IMR-90 (cell line): ENCODE measurements at regions of chr20 and their contacts with region 1.

Region 1: DNA sequence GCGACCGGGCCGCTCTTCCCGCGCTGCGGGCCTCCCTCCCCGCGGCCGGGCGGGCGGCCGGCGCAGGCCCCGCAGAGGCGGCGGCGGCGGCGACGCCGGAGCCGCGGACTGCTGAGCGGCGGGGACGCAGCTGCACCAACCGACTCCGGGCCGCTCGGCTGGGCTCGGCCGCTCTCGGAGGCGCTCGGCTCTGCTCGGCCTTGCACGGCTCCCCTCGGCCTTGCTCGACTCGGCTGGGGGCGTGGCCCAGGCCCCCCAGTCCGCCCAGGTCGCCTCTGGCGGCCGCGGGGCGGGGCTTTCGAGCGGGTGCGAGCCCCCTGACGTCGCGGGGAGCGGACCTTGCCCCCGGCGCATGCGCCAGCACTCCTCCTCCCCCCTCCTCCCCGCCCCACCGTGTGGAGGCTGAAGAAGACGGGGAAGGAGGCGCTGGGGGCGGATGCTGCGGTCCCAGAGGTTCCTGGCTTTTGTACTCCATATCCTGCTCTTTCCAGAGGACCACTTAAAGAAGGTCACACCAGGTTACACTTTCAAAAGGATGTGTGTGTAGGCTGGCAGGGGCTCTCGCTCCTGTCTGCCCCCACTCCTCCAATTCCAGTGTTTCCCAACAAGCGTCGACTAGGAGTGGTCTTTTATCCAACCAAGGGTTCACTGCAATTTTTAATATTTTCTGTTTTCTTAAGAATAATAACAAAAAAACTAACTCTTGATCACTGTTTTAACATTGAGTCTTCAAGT is at the start of gene ZHX3:
- DNase-seq: peak; percentile 94
- ATAC-seq: peak; percentile 94
- H3K4me3 ChIP-seq: peak within 1 kb of the TSS; percentile 55
- H3K27ac ChIP-seq: peak within 1 kb of the TSS; percentile 97
- H3K4me1 ChIP-seq: peaks cover 4% of the 10 kb centered on the region
- H3K27me3 ChIP-seq: no peaks in the 10 kb centered on the region
- CTCF ChIP-seq: no peak
- POLR2A ChIP-seq: no peak
- RAD21 ChIP-seq: no peak
- total RNA-seq, gene ZHX3: 28.0 and 28.3 TPM in 2 replicates

Region 2: GRCh38 chr20:41249406-41250281 is 68.1 kb before region 1 on chr20:
- CTCF ChIA-PET with region 1: interaction called, 4 read pairs
- POLR2A ChIA-PET with region 1: no interaction called
- dilution Hi-C with region 1: no loop called
- in situ Hi-C with region 1: no loop called
- intact Hi-C with region 1: loop called (anchors 5 kb)
- DNase-seq: peak; percentile 87
- ATAC-seq: peak; percentile 91
- H3K4me3 ChIP-seq: no peak overlapping the region
- H3K27ac ChIP-seq: peak overlapping the region; percentile 5
- H3K4me1 ChIP-seq: peaks cover 21% of the 10 kb centered on the region
- H3K27me3 ChIP-seq: no peaks in the 10 kb centered on the region
- CTCF ChIP-seq: peak; percentile 24; the same call in 1 of the 2 replicates
- POLR2A ChIP-seq: no peak
- RAD21 ChIP-seq: peak; percentile 24; the same call in 1 of the 2 replicates

Region 3: GRCh38 chr20:41276317-41276751 is 41.4 kb before region 1 on chr20:
- CTCF ChIA-PET with region 1: no interaction called
- POLR2A ChIA-PET with region 1: no interaction called
- dilution Hi-C with region 1: no loop called
- in situ Hi-C with region 1: no loop called
- intact Hi-C with region 1: loop called (anchors 5 kb)
- DNase-seq: no peak
- ATAC-seq: no peak
- H3K4me3 ChIP-seq: no peak overlapping the region
- H3K27ac ChIP-seq: no peak overlapping the region
- H3K4me1 ChIP-seq: peaks cover 13% of the 10 kb centered on the region
- H3K27me3 ChIP-seq: no peaks in the 10 kb centered on the region
- CTCF ChIP-seq: no peak
- POLR2A ChIP-seq: no peak
- RAD21 ChIP-seq: no peak

Region 4: DNA sequence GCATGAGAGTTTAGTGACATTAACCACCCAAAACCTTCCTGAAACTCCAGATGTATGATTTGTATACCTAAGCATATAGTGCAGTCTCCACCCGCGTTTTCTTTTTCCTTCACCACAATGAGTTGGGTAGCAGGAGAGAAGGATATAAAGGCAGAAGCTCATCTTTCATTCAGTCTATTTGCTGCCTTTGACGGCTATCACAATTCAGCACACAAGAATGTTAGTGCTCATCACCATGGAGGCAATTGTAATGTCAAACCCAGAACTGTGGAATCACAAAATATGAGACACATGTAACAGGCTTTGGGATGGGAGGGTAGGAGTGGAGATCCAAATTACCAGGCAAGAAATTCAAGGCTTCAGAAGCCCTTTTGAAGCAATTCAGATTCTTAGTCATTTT is 17.8 kb before region 1 on chr20:
- CTCF ChIA-PET with region 1: no interaction called
- POLR2A ChIA-PET with region 1: no interaction called
- dilution Hi-C with region 1: no loop called
- in situ Hi-C with region 1: no loop called
- intact Hi-C with region 1: no loop called
- DNase-seq: no peak
- ATAC-seq: no peak
- H3K4me3 ChIP-seq: no peak overlapping the region
- H3K27ac ChIP-seq: no peak overlapping the region
- H3K4me1 ChIP-seq: peaks cover 5% of the 10 kb centered on the region; the same call in 1 of the 2 replicates
- H3K27me3 ChIP-seq: no peaks in the 10 kb centered on the region
- CTCF ChIP-seq: no peak
- POLR2A ChIP-seq: no peak
- RAD21 ChIP-seq: no peak

Region 5: GRCh38 chr20:41329435-41330342 is 12.0 kb after region 1 on chr20:
- CTCF ChIA-PET with region 1: no interaction called
- POLR2A ChIA-PET with region 1: interaction called, 6 read pairs
- dilution Hi-C with region 1: no loop called
- in situ Hi-C with region 1: no loop called
- intact Hi-C with region 1: loop called (anchors 1 kb)
- DNase-seq: peak; percentile 99
- ATAC-seq: peak; percentile 92
- H3K4me3 ChIP-seq: no peak overlapping the region
- H3K27ac ChIP-seq: peak overlapping the region; percentile 91
- H3K4me1 ChIP-seq: peaks cover 21% of the 10 kb centered on the region
- H3K27me3 ChIP-seq: no peaks in the 10 kb centered on the region
- CTCF ChIP-seq: no peak
- POLR2A ChIP-seq: peak; percentile 72; the same call in 1 of the 2 replicates
- RAD21 ChIP-seq: peak; percentile 37; the same call in 1 of the 2 replicates

Region 6: DNA sequence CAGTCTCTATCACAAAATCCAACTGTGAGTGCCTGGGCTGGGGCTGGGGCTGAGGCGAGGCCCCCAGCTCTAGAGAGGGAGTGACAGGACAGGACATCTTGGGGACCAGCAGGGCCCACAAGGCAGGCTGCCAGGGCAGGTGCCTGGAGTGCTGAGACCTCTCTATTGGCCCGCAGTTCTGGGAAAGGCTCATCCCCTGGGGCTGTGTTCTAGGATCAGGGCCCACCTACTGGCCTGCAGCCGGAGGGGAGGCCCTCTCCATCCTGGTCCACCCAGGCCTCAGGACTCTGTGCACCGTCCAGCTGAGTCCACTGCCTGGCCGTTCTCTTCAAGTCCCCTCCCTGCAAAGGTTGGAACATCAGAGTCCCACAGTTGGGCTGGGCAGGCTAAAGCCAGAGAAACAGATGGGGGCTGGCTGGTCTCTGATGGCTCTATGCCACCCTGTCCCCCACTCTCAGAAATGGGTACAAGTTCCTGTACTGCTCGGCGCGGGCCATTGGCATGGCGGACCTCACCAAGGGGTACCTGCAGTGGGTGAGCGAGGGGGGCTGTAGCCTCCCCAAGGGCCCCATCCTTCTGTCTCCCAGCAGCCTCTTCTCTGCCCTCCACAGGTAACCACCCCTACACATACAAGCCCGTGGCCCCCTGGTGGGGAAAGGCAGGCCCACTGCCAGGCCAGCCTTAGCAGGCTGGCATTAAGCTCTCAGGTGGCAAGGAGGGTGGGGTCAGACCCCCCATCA is 39.9 kb after region 1 on chr20:
- CTCF ChIA-PET with region 1: no interaction called
- POLR2A ChIA-PET with region 1: no interaction called
- dilution Hi-C with region 1: no loop called
- in situ Hi-C with region 1: no loop called
- intact Hi-C with region 1: no loop called
- DNase-seq: no peak
- ATAC-seq: no peak
- H3K4me3 ChIP-seq: no peak overlapping the region
- H3K27ac ChIP-seq: no peak overlapping the region
- H3K4me1 ChIP-seq: no peaks in the 10 kb centered on the region
- H3K27me3 ChIP-seq: no peaks in the 10 kb centered on the region; the same call in 1 of the 2 replicates
- CTCF ChIP-seq: no peak
- POLR2A ChIP-seq: no peak
- RAD21 ChIP-seq: no peak

Region 7: DNA sequence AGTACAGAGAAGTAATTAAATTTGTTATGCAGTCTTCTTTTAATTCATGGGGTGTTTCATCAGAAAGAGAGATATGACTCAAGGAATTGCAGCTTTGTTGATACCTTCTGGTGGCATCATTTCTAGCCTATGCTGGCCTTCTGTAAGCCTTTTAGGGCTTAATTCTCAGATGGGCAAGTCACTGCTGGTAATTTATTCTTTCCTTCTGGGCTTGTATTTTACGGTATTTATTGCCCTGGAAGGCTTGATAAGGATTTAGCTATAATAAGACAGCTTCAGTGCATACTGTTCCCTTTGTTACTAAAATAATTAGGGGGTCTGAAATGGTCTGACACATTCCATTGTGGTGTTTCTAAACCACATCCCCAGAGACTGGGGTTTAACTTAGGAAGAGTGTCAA is 106.8 kb after region 1 on chr20:
- CTCF ChIA-PET with region 1: no interaction called
- POLR2A ChIA-PET with region 1: no interaction called
- dilution Hi-C with region 1: no loop called
- in situ Hi-C with region 1: no loop called
- intact Hi-C with region 1: no loop called
- DNase-seq: peak; percentile 13
- ATAC-seq: no peak
- H3K4me3 ChIP-seq: no peak overlapping the region
- H3K27ac ChIP-seq: no peak overlapping the region
- H3K4me1 ChIP-seq: peaks cover 15% of the 10 kb centered on the region
- H3K27me3 ChIP-seq: no peaks in the 10 kb centered on the region
- CTCF ChIP-seq: no peak
- POLR2A ChIP-seq: no peak
- RAD21 ChIP-seq: no peak